ENCODE measurements at regions of chr16 and their contacts with region 1.

Region 1: GRCh38 chr16:68704232-68704867 is 32.7 kb upstream of the CDH1 start:
- DNase-seq: peak; percentile 90
- ATAC-seq: peak; percentile 94
- H3K4me3 ChIP-seq: no peak overlapping the region
- H3K27ac ChIP-seq: no peak overlapping the region
- H3K4me1 ChIP-seq: peaks cover 3% of the 10 kb centered on the region
- H3K27me3 ChIP-seq: no peaks in the 10 kb centered on the region
- CTCF ChIP-seq: peak; percentile 77

Region 2: GRCh38 chr16:68800257-68800875 is 96.0 kb after region 1 on chr16:
- intact Hi-C with region 1: loop called (anchors 10 kb)
- DNase-seq: no peak
- ATAC-seq: peak; percentile 89
- H3K4me3 ChIP-seq: no peak overlapping the region
- H3K27ac ChIP-seq: no peak overlapping the region
- H3K4me1 ChIP-seq: no peaks in the 10 kb centered on the region
- H3K27me3 ChIP-seq: no peaks in the 10 kb centered on the region
- CTCF ChIP-seq: peak; percentile 78